Ascending aorta (tissue), 2 donors: ENCODE measurements at regions of chr1 and their contacts with region 1.

Region 1: GRCh38 chr1:78617615-78618026 is 2.6 kb upstream of the IFI44L start:
- DNase-seq: peak; percentile 16 to 76
- H3K4me3 ChIP-seq: no peak overlapping the region
- H3K27ac ChIP-seq: no peak overlapping the region
- H3K4me1 ChIP-seq: peaks cover 0 to 3% of the 10 kb centered on the region in 2 donors
- H3K27me3 ChIP-seq: no peaks in the 10 kb centered on the region
- CTCF ChIP-seq: peak; percentile 79 to 93 (median 84)

Region 2: DNA sequence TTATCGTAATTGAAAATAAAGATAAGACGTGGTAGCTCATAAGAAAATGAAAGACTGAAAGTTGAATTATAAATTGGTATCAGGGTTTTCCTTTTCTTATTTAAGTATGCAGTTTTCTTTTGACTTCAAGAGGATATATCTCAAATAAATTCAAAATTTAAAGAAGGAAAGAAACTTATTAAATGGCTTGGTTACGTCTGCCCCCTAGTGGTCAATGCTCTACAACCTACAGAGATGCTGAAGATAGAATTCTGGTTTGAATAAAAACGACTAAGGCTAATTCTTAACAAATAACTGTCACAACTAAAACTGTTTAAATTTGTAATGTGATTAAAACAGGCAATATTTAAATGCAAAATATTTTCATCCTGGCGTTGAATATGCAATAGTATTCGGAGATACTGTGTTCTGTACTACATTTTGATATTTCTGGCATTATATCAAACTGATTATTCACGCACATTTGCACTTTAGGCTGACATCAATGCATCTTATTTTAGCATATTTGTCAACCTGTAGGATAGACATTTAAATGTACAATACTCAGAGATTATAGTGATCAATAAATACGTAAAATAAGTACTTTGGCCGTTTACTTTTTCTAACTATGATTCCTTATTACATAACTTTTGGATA is 58.8 kb after region 1 on chr1:
- intact Hi-C with region 1: loop called (anchors 1 kb)
- DNase-seq: peak in 1 of 2 donors; percentile 74
- H3K4me3 ChIP-seq: no peak overlapping the region
- H3K27ac ChIP-seq: no peak overlapping the region
- H3K4me1 ChIP-seq: no peaks in the 10 kb centered on the region
- H3K27me3 ChIP-seq: no peaks in the 10 kb centered on the region
- CTCF ChIP-seq: peak; percentile 57 to 85 (median 81)